ENCODE measurements at regions of chr11 and their contacts with region 1.

Region 1: GRCh38 chr11:1515082-1516060 is 28.8 kb upstream of the MOB2 start:
- DNase-seq: peak; percentile 75 to 89 (median 80)
- ATAC-seq: peak; percentile 79 to 90 (median 88)
- H3K4me3 ChIP-seq: no peak overlapping the region
- H3K27ac ChIP-seq: peak overlapping the region in 1 of 12 donors; percentile 6
- H3K4me1 ChIP-seq: peaks cover 15 to 79% (median 55%) of the 10 kb centered on the region in 12 donors
- H3K27me3 ChIP-seq: no peaks in the 10 kb centered on the region
- CTCF ChIP-seq: peak; percentile 87 to 99 (median 96)
- POLR2A ChIP-seq: no peak

Region 2: GRCh38 chr11:1262172-1263006 is 253.0 kb before region 1 on chr11:
- intact Hi-C with region 1: loop called in 4 of 10 experiments (anchors 5 to 10 kb)
- DNase-seq: peak; percentile 91 to 95 (median 93)
- ATAC-seq: peak; percentile 93 to 98 (median 95)
- H3K4me3 ChIP-seq: peak overlapping the region; percentile 12 to 69 (median 52)
- H3K27ac ChIP-seq: peak overlapping the region in 11 of 12 donors; percentile 65 to 83 (median 76)
- H3K4me1 ChIP-seq: peaks cover 0 to 18% (median 13%) of the 10 kb centered on the region in 12 donors
- H3K27me3 ChIP-seq: no peaks in the 10 kb centered on the region
- CTCF ChIP-seq: no peak
- POLR2A ChIP-seq: peak in 1 of 2 donors; percentile 53

Region 3: DNA sequence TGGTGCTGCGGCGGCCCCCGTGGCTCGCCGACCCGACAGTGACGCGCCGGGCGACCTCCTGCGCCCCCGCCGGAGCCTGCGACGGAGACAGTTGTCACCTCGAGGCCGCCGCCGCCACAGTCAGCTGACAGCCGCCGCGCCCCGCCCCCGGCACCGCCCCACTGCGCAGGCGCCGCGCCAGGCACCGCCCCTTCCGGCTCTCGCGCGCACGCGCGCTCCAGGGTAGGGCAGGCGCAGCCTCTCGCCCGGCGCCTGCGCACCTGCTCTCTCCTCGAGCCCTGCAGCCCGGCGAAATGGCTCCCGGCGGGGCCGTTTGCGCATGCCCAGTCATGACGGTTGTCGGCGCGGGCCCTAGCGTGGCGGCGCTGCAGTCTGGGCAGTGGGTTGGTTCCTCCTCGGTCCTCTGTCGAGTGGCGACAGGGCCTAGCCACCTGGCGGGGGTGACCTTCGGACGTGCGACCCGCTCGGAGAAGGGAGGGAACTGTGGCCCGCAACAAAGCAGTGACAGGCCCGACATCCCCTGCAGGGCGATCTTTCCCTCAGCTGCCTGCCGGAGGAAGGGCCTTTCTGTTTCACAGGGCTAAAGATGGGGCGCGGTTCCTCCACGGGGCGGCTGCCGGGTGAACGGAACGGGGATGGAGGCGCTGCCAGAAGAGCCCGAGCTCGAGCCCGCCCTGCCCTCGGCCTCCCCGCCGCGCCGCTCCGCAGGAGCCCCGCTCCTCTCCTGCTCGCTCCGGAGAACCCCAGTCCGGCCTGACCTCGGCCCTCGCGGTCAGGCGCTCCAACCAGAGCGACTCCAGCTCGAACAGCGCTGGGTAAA is 205.7 kb before region 1 on chr11 and contains the start of gene TOLLIP:
- intact Hi-C with region 1: loop called in 4 of 10 experiments (anchors 1 to 10 kb)
- DNase-seq: peak; percentile 96 to 99 (median 97)
- ATAC-seq: peak; percentile 96 to 99 (median 97)
- H3K4me3 ChIP-seq: peak within 1 kb of the TSS; percentile 58 to 98 (median 85)
- H3K27ac ChIP-seq: peak within 1 kb of the TSS; percentile 86 to 97 (median 94)
- H3K4me1 ChIP-seq: peaks cover 0 to 43% (median 27%) of the 10 kb centered on the region in 12 donors
- H3K27me3 ChIP-seq: no peaks in the 10 kb centered on the region
- CTCF ChIP-seq: peak in 7 of 12 donors; percentile 8 to 56 (median 41)
- POLR2A ChIP-seq: peak; percentile 6 to 92
- total RNA-seq, gene TOLLIP: 36.9 to 57.2 (median 44.9) TPM

Region 4: GRCh38 chr11:1389103-1389931 is 126.1 kb before region 1 on chr11:
- intact Hi-C with region 1: loop called in 1 of 10 experiments (anchors 10 kb)
- DNase-seq: peak; percentile 95 to 98 (median 97)
- ATAC-seq: peak; percentile 99
- H3K4me3 ChIP-seq: peak overlapping the region; percentile 34 to 76 (median 58)
- H3K27ac ChIP-seq: peak overlapping the region in 10 of 12 donors; percentile 27 to 74 (median 53)
- H3K4me1 ChIP-seq: peaks cover 0 to 25% (median 9%) of the 10 kb centered on the region in 12 donors
- H3K27me3 ChIP-seq: peaks cover 9 to 47% (median 22%) of the 10 kb centered on the region in 9 donors
- CTCF ChIP-seq: peak in 5 of 12 donors; percentile 12 to 44 (median 32)
- POLR2A ChIP-seq: no peak

Region 5: DNA sequence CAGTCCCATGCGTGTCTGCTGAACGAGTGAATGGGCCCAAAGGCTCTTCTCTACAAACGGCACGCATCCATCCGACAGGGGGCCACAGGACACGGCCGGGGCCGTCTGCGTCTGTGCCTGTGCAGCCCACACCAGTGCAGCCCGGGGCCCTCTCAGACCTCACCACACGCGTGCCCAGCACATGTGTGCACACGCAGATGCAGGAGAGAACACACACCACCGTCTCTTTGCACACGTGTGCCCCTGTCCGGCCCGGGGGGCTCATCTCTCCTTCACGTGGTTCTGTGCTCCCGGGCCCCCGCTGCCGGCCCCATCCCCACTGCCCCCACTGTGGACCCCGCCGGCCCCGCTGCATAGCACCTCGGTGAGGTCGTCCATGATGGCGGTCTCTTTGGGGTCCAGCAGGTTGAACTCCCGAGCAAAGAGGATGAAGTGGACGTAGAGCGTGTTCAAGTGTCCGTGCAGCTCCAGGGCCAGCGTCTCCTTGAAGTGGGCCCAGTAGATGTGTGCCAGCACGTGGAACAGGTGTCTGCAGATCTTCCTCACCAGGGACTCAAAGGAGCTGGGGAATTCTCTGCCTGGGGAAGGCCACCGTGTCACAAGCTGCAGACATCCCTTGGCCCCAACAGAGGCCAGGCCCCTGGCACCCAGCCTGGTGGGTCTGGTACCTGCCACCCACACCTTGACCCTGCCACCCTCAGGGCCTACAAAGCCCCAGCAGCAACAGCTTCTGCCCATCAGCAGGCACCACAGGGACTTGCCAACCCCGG is 45.3 kb before region 1 on chr11:
- intact Hi-C with region 1: loop called in 2 of 10 experiments (anchors 5 kb)
- DNase-seq: peak in 3 of 5 donors; percentile 13 to 47 (median 18)
- ATAC-seq: no peak
- H3K4me3 ChIP-seq: no peak overlapping the region
- H3K27ac ChIP-seq: no peak overlapping the region
- H3K4me1 ChIP-seq: peaks cover 0 to 14% (median 0%) of the 10 kb centered on the region in 12 donors
- H3K27me3 ChIP-seq: no peaks in the 10 kb centered on the region
- CTCF ChIP-seq: no peak
- POLR2A ChIP-seq: no peak

Region 6: GRCh38 chr11:1546536-1547400 is 31.4 kb after region 1 on chr11:
- intact Hi-C with region 1: no loop called
- DNase-seq: peak; percentile 54 to 71 (median 60)
- ATAC-seq: peak in 3 of 4 donors; percentile 29 to 69 (median 57)
- H3K4me3 ChIP-seq: peak overlapping the region; percentile 34 to 63 (median 52)
- H3K27ac ChIP-seq: peak overlapping the region in 11 of 12 donors; percentile 72 to 95 (median 85)
- H3K4me1 ChIP-seq: peaks cover 5 to 32% (median 19%) of the 10 kb centered on the region in 12 donors
- H3K27me3 ChIP-seq: peaks cover 0 to 35% (median 9%) of the 10 kb centered on the region in 9 donors
- CTCF ChIP-seq: peak; percentile 57 to 93 (median 81)
- POLR2A ChIP-seq: no peak

Region 7: GRCh38 chr11:1876361-1877063 is 361.1 kb after region 1 on chr11:
- intact Hi-C with region 1: no loop called
- DNase-seq: peak; percentile 82 to 87 (median 85)
- ATAC-seq: peak in 3 of 4 donors; percentile 16 to 38 (median 32)
- H3K4me3 ChIP-seq: peak overlapping the region in 9 of 12 donors; percentile 13 to 43 (median 23)
- H3K27ac ChIP-seq: peak overlapping the region; percentile 69 to 99 (median 96)
- H3K4me1 ChIP-seq: peaks cover 24 to 67% (median 52%) of the 10 kb centered on the region in 12 donors
- H3K27me3 ChIP-seq: no peaks in the 10 kb centered on the region
- CTCF ChIP-seq: peak; percentile 50 to 70 (median 56)
- POLR2A ChIP-seq: no peak

Measured in heart left ventricle (tissue), 16 donors.